ENCODE measurements at regions of chr2 and their contacts with region 1.

Region 1: GRCh38 chr2:138787053-138787666 is 7.0 kb upstream of the NXPH2 start:
- DNase-seq: peak; percentile 39
- ATAC-seq: no peak
- H3K4me3 ChIP-seq: no peak overlapping the region
- H3K4me3 Mint-ChIP-seq: no peak overlapping the region
- H3K27ac ChIP-seq: no peak overlapping the region
- H3K27ac Mint-ChIP-seq: no peak overlapping the region
- H3K4me1 ChIP-seq: no peaks in the 10 kb centered on the region
- H3K4me1 Mint-ChIP-seq: no peaks in the 10 kb centered on the region
- H3K27me3 ChIP-seq: no peaks in the 10 kb centered on the region
- H3K27me3 Mint-ChIP-seq: peaks cover 37% of the 10 kb centered on the region
- CTCF ChIP-seq: peak; percentile 82

Region 2: GRCh38 chr2:137865954-137866540 is 921.1 kb before region 1 on chr2:
- CTCF ChIA-PET with region 1: interaction called, 40 read pairs
- POLR2A ChIA-PET with region 1: no interaction called
- intact Hi-C with region 1: no loop called
- DNase-seq: peak; percentile 37
- ATAC-seq: no peak
- H3K4me3 ChIP-seq: no peak overlapping the region
- H3K4me3 Mint-ChIP-seq: no peak overlapping the region
- H3K27ac ChIP-seq: no peak overlapping the region
- H3K27ac Mint-ChIP-seq: no peak overlapping the region
- H3K4me1 ChIP-seq: no peaks in the 10 kb centered on the region
- H3K4me1 Mint-ChIP-seq: no peaks in the 10 kb centered on the region
- H3K27me3 ChIP-seq: no peaks in the 10 kb centered on the region
- H3K27me3 Mint-ChIP-seq: peaks cover 12% of the 10 kb centered on the region
- CTCF ChIP-seq: peak; percentile 81

Region 3: DNA sequence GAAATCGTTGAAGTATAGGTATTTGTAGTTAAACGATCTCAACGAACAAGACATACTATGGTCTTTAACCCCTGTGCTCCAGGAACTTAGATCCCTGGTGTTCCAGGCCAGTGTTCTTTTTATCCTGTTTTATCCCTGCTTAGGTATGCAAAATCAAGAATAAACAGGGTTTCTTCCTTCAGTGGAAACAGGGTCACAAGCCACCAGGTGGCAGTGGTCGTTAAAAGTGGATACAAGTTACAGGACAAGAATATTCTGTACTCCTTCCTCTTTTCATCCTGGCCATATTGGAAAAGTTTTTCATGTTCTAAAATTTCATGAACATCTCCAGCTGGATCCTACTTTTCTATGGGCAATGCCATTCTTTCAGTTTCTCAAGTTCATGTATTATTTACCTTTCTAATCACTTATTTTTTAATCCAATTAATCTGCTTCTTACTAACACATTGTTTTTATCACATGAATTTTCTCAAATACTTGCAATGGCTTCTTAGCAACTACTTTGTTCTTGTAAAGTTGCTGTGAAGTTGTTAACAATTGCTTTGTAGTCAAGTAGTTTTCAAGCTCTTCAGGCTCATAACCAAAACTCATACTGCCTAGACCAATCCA is 839.3 kb before region 1 on chr2:
- CTCF ChIA-PET with region 1: interaction called, 27 read pairs
- POLR2A ChIA-PET with region 1: no interaction called
- intact Hi-C with region 1: no loop called
- DNase-seq: peak; percentile 43
- ATAC-seq: no peak
- H3K4me3 ChIP-seq: no peak overlapping the region
- H3K4me3 Mint-ChIP-seq: no peak overlapping the region
- H3K27ac ChIP-seq: no peak overlapping the region
- H3K27ac Mint-ChIP-seq: no peak overlapping the region
- H3K4me1 ChIP-seq: no peaks in the 10 kb centered on the region
- H3K4me1 Mint-ChIP-seq: peaks cover 4% of the 10 kb centered on the region
- H3K27me3 ChIP-seq: no peaks in the 10 kb centered on the region
- H3K27me3 Mint-ChIP-seq: peaks cover 3% of the 10 kb centered on the region
- CTCF ChIP-seq: peak; percentile 59

Region 4: DNA sequence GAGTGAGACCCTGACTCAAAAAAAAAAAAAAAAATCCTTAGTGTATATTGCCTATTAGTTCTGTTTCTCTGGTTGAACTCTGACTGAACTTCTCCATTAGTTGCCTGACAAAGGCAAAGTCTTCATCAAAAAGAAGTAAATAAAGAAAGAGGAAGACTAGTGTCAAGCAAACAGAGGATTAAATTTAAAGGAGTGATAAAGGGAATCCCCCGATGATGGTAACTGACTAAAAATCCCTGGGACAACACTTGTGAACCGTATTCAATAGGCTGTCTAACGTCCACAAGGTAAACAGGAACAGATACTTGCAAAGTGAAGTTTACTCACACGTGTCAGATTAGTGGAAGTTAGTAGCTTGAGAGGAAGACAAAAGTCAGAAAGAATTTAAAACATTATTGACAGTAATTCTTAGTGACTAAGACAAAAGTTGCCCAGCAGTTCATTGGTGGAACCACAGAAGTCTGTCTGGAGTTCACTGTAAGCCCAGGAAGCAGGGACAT is 311.8 kb before region 1 on chr2:
- CTCF ChIA-PET with region 1: interaction called, 12 read pairs
- POLR2A ChIA-PET with region 1: no interaction called
- intact Hi-C with region 1: no loop called
- DNase-seq: peak; percentile 68
- ATAC-seq: peak; percentile 76
- H3K4me3 ChIP-seq: peak overlapping the region in 1 of 5 experiments; percentile 23
- H3K4me3 Mint-ChIP-seq: peak overlapping the region; percentile 6
- H3K27ac ChIP-seq: peak overlapping the region; percentile 21 to 62
- H3K27ac Mint-ChIP-seq: peak overlapping the region; percentile 47
- H3K4me1 ChIP-seq: peaks cover 23% of the 10 kb centered on the region in 2 donors
- H3K4me1 Mint-ChIP-seq: peaks cover 30% of the 10 kb centered on the region
- H3K27me3 ChIP-seq: no peaks in the 10 kb centered on the region
- H3K27me3 Mint-ChIP-seq: no peaks in the 10 kb centered on the region
- CTCF ChIP-seq: no peak

Region 5: GRCh38 chr2:138827426-138828054 is 40.4 kb after region 1 on chr2:
- CTCF ChIA-PET with region 1: interaction called, 34 read pairs
- POLR2A ChIA-PET with region 1: no interaction called
- intact Hi-C with region 1: loop called (anchors 1 kb)
- DNase-seq: peak; percentile 54
- ATAC-seq: no peak
- H3K4me3 ChIP-seq: no peak overlapping the region
- H3K4me3 Mint-ChIP-seq: no peak overlapping the region
- H3K27ac ChIP-seq: no peak overlapping the region
- H3K27ac Mint-ChIP-seq: no peak overlapping the region
- H3K4me1 ChIP-seq: no peaks in the 10 kb centered on the region
- H3K4me1 Mint-ChIP-seq: no peaks in the 10 kb centered on the region
- H3K27me3 ChIP-seq: no peaks in the 10 kb centered on the region
- H3K27me3 Mint-ChIP-seq: peaks cover 10% of the 10 kb centered on the region
- CTCF ChIP-seq: peak; percentile 86

Region 6: DNA sequence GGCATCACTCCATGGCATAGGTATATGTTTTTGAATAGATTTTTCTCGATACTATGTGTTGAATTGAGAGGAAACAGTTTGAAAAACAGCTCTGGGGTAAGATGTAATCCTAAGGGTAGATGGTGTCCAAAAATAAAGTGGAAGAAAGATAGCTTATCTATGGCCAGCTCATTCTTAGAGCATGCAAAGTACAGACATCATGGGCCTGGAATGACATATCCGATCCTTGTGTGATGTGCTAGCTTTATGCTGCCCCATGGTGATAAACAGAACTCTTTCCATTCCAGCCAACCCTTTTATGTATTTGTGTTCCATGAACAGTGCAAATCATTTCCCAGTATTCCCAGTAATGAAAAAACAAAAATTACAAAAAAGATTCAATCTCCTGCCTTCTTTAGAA is 383.2 kb after region 1 on chr2:
- CTCF ChIA-PET with region 1: no interaction called
- POLR2A ChIA-PET with region 1: no interaction called
- intact Hi-C with region 1: no loop called
- DNase-seq: no peak
- ATAC-seq: no peak
- H3K4me3 ChIP-seq: no peak overlapping the region
- H3K4me3 Mint-ChIP-seq: no peak overlapping the region
- H3K27ac ChIP-seq: no peak overlapping the region
- H3K27ac Mint-ChIP-seq: no peak overlapping the region
- H3K4me1 ChIP-seq: no peaks in the 10 kb centered on the region
- H3K4me1 Mint-ChIP-seq: no peaks in the 10 kb centered on the region
- H3K27me3 ChIP-seq: no peaks in the 10 kb centered on the region
- H3K27me3 Mint-ChIP-seq: no peaks in the 10 kb centered on the region
- CTCF ChIP-seq: no peak

Measured in B cell (primary cell).